OCI-LY7 (cell line): ENCODE measurements at regions of chr6 and their contacts with region 1.

Region 1: GRCh38 chr6:75611702-75612375 is 10.2 kb downstream of the SENP6 start:
- DNase-seq: no peak
- H3K4me3 ChIP-seq: no peak overlapping the region
- H3K27ac ChIP-seq: no peak overlapping the region
- H3K4me1 ChIP-seq: peaks cover 54% of the 10 kb centered on the region
- CTCF ChIP-seq: no peak

Region 2: GRCh38 chr6:73653571-73654424 is 1958.0 kb before region 1 on chr6 and contains the start of gene SLC17A5:
- CTCF ChIA-PET with region 1: no interaction called
- POLR2A ChIA-PET with region 1: no interaction called
- intact Hi-C with region 1: loop called (anchors 10 kb)
- DNase-seq: peak; percentile 93
- H3K4me3 ChIP-seq: peak within 1 kb of the TSS; percentile 96
- H3K27ac ChIP-seq: peak within 1 kb of the TSS; percentile 83
- H3K4me1 ChIP-seq: peaks cover 19% of the 10 kb centered on the region
- CTCF ChIP-seq: no peak
- total RNA-seq, gene SLC17A5: 7.4 and 8.5 TPM in 2 replicates

Region 3: DNA sequence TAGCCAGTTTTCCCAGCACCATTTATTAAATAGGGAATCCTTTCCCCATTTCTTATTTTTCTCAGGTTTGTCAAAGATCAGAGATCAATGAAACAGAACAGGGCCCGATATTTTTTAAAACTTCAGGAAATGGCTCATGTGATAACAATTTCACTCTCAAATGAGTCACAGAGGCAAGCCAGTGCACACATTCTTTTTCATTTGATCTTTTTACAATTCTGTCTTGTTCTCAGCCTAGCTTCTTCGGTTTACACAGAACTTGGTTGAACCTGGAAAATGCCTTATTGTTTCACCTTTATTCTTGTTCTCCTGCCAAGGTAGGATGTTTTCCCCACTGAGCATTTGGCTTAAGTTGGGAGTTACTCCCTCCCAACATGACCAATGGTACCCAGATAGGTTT is 664.9 kb before region 1 on chr6:
- CTCF ChIA-PET with region 1: no interaction called
- POLR2A ChIA-PET with region 1: no interaction called
- intact Hi-C with region 1: no loop called
- DNase-seq: no peak
- H3K4me3 ChIP-seq: no peak overlapping the region
- H3K27ac ChIP-seq: no peak overlapping the region
- H3K4me1 ChIP-seq: no peaks in the 10 kb centered on the region
- CTCF ChIP-seq: no peak

Region 4: GRCh38 chr6:75098709-75099108 is 513.1 kb before region 1 on chr6:
- CTCF ChIA-PET with region 1: no interaction called
- POLR2A ChIA-PET with region 1: no interaction called
- intact Hi-C with region 1: no loop called
- DNase-seq: no peak
- H3K4me3 ChIP-seq: no peak overlapping the region
- H3K27ac ChIP-seq: no peak overlapping the region
- H3K4me1 ChIP-seq: no peaks in the 10 kb centered on the region
- CTCF ChIP-seq: no peak

Region 5: DNA sequence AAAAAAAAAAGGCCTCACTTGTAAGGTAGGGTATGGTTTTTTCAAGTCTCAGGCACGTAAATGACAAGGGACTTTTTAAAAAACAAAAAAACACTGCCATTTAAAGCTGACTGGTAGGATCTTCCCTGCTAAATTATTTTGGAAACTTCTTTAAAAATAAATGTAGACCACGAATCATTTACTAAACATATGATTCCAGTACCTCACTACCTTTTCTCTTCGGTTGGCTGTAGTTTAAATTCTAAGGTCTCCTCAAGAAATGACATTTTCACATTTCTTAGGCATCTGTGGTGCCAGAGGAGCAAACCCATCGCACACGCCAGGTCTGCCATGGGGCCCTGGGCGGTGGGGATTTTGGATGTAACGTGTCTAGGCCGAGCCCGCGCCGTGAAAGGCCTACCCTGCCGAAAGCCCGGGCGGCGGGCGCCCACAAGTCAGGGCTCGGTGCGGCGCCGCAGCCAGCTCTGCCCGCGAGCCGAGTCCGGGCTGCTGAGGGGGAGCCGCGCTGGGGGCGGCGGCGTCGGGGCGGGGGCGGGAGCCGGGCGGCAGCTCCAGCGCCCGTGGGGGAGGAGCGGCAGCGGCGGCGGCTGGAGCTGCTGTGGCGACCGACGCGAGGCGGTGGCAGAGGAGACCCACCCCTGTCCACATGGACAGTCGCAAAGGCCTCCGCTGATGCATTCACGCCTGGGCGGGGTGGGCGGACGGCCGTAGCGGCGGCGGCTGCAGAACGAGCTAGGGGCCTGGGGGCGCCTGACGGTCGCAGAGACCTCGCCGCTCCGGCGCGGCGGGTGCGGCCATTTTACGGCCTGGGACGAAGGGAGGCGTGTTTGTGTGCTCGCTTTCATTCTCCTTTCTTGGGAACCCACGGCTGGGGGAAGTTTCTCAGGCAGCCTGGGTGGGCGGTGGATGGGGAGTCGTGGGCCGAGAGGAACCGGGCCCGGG is 10.3 kb before region 1 on chr6 and contains the start of gene SENP6:
- CTCF ChIA-PET with region 1: interaction called, 5 read pairs
- POLR2A ChIA-PET with region 1: interaction called, 16 read pairs
- intact Hi-C with region 1: no loop called
- DNase-seq: peak; percentile 85
- H3K4me3 ChIP-seq: peak within 1 kb of the TSS; percentile 98
- H3K27ac ChIP-seq: peak within 1 kb of the TSS; percentile 82
- H3K4me1 ChIP-seq: peaks cover 30% of the 10 kb centered on the region
- CTCF ChIP-seq: no peak
- total RNA-seq, gene SENP6: 61.1 and 63.5 TPM in 2 replicates

Region 6: DNA sequence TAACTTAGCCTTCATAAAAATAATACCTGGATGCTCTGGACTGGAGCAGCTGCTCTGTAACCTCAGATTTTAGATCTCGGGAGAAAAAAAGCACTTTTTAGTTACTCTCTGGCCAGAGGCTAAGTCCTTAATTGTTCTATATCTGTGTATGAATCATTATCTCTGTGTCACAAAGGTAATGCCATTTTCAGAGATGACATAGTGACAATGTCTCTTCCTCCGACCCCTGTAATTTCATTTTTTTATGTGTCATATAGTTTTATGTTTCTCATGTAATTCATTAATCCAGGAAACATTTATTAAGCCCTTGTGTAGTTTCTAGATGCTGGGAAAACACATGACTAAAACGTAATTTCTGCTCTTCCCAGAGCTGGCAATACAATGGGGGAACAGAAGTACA is 45.5 kb after region 1 on chr6:
- CTCF ChIA-PET with region 1: no interaction called
- POLR2A ChIA-PET with region 1: no interaction called
- intact Hi-C with region 1: no loop called
- DNase-seq: no peak
- H3K4me3 ChIP-seq: no peak overlapping the region
- H3K27ac ChIP-seq: no peak overlapping the region
- H3K4me1 ChIP-seq: no peaks in the 10 kb centered on the region
- CTCF ChIP-seq: no peak

Region 7: GRCh38 chr6:75874224-75874623 is 262.4 kb after region 1 on chr6:
- CTCF ChIA-PET with region 1: no interaction called
- POLR2A ChIA-PET with region 1: no interaction called
- intact Hi-C with region 1: no loop called
- DNase-seq: no peak
- H3K4me3 ChIP-seq: no peak overlapping the region
- H3K27ac ChIP-seq: no peak overlapping the region
- H3K4me1 ChIP-seq: no peaks in the 10 kb centered on the region
- CTCF ChIP-seq: no peak